Caco-2 (cell line): ENCODE measurements at regions of chr12 and their contacts with region 1.

Region 1: DNA sequence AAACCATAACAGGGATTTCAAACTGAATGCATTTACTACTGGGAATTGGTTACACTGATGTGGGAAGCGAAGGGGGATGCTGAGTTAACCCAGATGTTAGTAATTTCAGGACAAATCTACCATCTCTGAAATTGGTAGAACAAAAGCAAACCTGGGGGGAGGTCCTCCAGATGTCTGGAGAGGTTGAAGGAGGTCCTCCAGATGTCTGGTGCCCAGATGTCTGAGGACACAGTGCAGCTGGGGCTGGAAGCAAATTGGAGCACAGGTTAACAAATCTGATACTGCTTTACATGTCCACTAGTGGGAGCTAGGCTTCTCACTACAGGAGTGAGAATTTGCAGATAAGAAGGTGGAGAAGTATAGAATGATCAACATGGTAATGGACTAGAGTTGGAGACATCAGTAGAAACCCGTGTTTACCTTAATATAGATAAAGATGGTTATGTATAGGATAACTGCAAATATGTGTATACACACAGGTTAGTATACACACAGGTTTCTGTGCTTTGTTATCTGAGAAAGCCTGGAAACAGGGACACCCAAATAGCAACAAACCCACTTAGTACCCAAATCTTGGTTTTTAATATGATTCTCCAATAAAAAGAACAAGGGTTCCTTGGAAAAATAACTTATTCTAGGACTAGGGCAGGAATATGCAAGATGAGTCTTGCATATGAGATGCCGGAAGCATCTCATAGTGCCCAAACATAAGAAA is 162.5 kb downstream of the C12orf50 start:
- DNase-seq: peak in 1 of 2 experiments; percentile 28
- H3K4me3 ChIP-seq: no peak overlapping the region
- H3K4me3 Mint-ChIP-seq: no peak overlapping the region
- H3K27ac Mint-ChIP-seq: no peak overlapping the region
- H3K4me1 ChIP-seq: no peaks in the 10 kb centered on the region
- H3K4me1 Mint-ChIP-seq: no peaks in the 10 kb centered on the region
- H3K27me3 ChIP-seq: no peaks in the 10 kb centered on the region
- H3K27me3 Mint-ChIP-seq: no peaks in the 10 kb centered on the region
- CTCF ChIP-seq: peak; percentile 42 to 71

Region 2: GRCh38 chr12:87901457-87901856 is 34.7 kb after region 1 on chr12:
- CTCF ChIA-PET with region 1: no interaction called
- POLR2A ChIA-PET with region 1: no interaction called
- intact Hi-C with region 1: no loop called
- DNase-seq: no peak
- H3K4me3 ChIP-seq: no peak overlapping the region
- H3K4me3 Mint-ChIP-seq: no peak overlapping the region
- H3K27ac Mint-ChIP-seq: no peak overlapping the region
- H3K4me1 ChIP-seq: no peaks in the 10 kb centered on the region
- H3K4me1 Mint-ChIP-seq: no peaks in the 10 kb centered on the region
- H3K27me3 ChIP-seq: no peaks in the 10 kb centered on the region
- H3K27me3 Mint-ChIP-seq: no peaks in the 10 kb centered on the region
- CTCF ChIP-seq: no peak

Region 3: DNA sequence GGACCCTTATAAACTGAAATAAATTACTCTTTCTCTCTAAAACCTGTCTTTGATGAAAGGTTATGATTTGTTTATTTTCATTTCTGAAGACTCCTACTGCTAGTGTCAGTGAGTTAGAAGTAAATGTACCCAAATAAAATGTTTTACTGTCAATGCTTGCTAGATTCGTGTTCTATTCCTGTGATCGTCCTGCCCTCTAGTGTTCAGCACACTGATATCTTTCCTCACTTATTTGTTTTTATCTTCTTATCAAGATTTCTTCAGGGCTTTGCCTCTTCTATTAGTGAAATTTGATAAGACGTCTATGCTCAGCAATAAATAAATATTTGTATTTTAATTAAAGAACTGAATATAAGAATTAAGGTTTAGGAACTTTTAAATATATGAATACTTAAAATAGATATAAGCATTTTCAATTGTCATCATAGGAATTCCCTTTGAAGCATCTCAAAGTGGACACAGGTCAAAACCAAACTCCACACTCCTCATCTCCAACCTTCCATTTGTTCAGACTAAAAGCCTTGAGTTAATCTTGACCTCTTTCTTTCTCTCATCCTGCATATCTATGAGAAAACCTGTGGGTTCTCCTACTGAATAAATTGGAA is 86.6 kb after region 1 on chr12:
- CTCF ChIA-PET with region 1: no interaction called
- POLR2A ChIA-PET with region 1: no interaction called
- intact Hi-C with region 1: loop called (anchors 1 kb)
- DNase-seq: peak in 1 of 2 experiments; percentile 9
- H3K4me3 ChIP-seq: no peak overlapping the region
- H3K4me3 Mint-ChIP-seq: no peak overlapping the region
- H3K27ac Mint-ChIP-seq: no peak overlapping the region
- H3K4me1 ChIP-seq: no peaks in the 10 kb centered on the region
- H3K4me1 Mint-ChIP-seq: no peaks in the 10 kb centered on the region
- H3K27me3 ChIP-seq: no peaks in the 10 kb centered on the region
- H3K27me3 Mint-ChIP-seq: no peaks in the 10 kb centered on the region
- CTCF ChIP-seq: peak; percentile 33 to 61